ENCODE measurements at regions of chr17 and their contacts with region 1.

Region 1: DNA sequence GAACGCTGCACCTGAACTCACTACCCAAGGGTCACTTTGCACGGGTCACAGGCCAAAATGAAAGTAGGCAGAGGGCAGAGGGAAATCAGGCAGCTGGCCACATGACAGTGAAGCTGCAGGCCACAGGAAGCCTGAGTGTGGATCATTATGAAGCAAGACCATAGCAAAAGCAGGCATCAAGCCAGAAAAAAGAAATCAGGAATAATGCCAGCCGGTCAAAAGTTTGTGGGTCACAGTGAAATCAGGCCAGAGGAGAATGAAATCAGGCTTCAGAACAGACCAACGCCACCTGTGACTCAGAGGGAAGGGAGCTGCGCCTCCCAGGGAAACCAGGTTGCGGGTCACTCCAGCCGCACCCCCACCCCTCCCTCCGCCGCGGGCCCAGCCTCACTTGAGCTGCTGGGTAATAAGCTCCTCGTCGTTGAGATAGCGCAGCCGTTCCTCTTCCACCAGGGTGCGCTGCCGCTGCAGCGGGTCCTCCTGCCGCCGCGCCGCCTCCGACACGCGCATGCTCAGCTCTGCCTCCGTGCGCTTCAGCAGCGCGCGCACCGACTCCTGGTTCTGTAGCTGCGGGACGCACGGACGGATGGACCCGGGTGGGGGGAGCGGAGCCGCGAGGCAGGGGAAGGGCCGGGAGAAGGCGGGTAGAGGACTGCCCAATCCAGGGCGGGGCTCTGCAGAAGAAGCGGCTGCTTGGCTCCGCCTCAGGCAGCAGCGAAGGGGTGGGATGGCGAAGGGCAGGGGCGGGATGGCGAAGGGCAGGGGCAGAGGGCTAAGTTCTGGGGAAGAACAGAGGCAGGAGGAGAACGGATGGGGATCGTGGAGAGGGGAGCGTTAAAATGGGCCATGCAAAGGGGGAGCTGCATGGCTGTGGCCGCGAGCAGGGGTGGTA is 47.7 kb downstream of the SRCIN1 start:
- DNase-seq: peak; percentile 93
- ATAC-seq: peak; percentile 86
- H3K4me3 Mint-ChIP-seq: peak overlapping the region; percentile 79
- H3K27ac Mint-ChIP-seq: no peak overlapping the region
- H3K4me1 Mint-ChIP-seq: peaks cover 30% of the 10 kb centered on the region
- H3K27me3 Mint-ChIP-seq: peaks cover 44% of the 10 kb centered on the region

Region 2: DNA sequence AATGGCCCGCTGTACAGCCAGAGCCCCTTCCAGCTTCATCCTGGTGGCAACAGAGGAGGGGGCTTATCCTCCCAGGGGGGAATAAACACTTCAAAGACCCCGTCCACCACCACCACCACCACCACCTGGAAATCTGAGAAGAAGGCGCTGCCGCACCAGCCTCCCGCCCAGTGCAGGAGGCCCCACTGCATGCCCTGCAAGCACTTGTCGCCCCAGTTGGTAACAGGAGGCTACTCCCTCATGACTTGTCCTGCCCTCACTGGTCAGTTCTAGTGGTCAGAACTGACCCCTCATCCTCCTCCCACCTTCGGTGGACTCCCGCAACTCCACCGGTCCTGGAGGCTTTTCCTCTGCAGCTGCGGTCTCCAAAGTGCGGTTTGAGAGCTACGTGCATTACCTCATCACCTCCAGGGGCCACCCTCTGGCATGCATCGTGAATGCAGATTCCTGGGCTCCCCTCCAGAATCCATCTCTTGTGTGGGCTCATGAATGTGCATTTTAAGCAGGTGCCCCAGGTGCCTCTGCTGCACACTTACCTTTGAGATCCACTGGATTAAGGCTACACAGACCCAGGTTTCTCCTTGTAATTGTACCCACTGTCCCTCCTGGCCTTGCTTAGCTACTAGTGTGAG is 24.1 kb before region 1 on chr17:
- CTCF ChIA-PET with region 1: interaction called, 19 read pairs
- POLR2A ChIA-PET with region 1: interaction called, 3 read pairs
- DNase-seq: no peak
- ATAC-seq: no peak
- H3K4me3 Mint-ChIP-seq: no peak overlapping the region
- H3K27ac Mint-ChIP-seq: no peak overlapping the region
- H3K4me1 Mint-ChIP-seq: no peaks in the 10 kb centered on the region
- H3K27me3 Mint-ChIP-seq: peaks cover 6% of the 10 kb centered on the region

Region 3: GRCh38 chr17:38591759-38592241 is 33.7 kb after region 1 on chr17:
- CTCF ChIA-PET with region 1: interaction called, 136 read pairs
- POLR2A ChIA-PET with region 1: no interaction called
- DNase-seq: peak; percentile 59
- ATAC-seq: peak; percentile 59
- H3K4me3 Mint-ChIP-seq: peak overlapping the region; percentile 32
- H3K27ac Mint-ChIP-seq: peak overlapping the region; percentile 41
- H3K4me1 Mint-ChIP-seq: peaks cover 49% of the 10 kb centered on the region
- H3K27me3 Mint-ChIP-seq: peaks cover 78% of the 10 kb centered on the region

Region 4: GRCh38 chr17:38605888-38606645 is 48.0 kb after region 1 on chr17 and contains the start of gene SRCIN1:
- CTCF ChIA-PET with region 1: interaction called, 37 read pairs
- POLR2A ChIA-PET with region 1: no interaction called
- DNase-seq: peak; percentile 61
- ATAC-seq: peak; percentile 50
- H3K4me3 Mint-ChIP-seq: peak within 1 kb of the TSS; percentile 63
- H3K27ac Mint-ChIP-seq: no peak within 1 kb of the TSS
- H3K4me1 Mint-ChIP-seq: peaks cover 19% of the 10 kb centered on the region
- H3K27me3 Mint-ChIP-seq: peaks cover 67% of the 10 kb centered on the region
- total RNA-seq, gene SRCIN1: 0.34 TPM in 1 of 2 experiments, not detected in the other

Region 5: DNA sequence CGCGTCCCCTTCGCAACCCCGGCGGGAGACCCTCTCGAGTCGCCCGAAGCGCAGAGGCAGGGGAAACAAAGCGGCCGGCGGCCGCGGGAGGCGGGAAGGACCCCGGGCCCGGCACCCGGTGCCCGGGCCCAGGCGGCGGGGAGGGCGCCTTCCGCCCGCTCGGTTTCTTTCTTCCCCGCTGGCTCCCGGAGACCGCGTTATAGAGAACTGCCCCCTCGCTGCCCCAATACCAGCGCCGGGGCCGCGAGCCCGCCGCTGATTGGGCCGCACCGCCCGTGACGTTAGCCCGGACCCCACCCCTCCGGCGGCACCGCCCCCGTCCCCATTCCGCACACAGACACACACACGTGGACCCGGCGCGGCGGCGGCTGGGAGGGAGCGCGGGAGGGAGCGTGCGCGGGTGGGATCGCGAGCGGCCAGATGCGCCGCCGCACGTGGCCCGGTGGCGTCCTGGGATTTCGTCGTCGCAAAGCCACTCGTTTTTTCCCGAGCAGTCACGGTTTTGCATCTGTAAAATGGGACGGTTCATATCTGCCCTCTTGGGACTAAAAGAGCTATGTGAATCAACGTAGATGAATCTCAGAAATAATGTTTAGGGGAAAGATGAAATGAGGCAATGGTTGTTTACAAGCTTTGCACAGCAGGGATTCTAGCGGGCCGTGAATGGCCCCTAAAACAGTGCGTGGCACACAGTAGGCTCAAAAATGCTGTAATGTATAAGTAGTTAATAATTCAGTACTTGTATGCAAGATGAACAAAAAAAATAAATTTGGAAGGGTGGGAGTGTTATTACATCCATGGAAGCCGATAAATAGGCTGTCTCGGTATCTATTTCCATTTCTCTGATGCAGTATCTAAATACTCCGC is 116.9 kb after region 1 on chr17 and contains the start of gene EPOP:
- CTCF ChIA-PET with region 1: interaction called, 345 read pairs
- POLR2A ChIA-PET with region 1: no interaction called
- DNase-seq: peak; percentile 91
- ATAC-seq: peak; percentile 89
- H3K4me3 Mint-ChIP-seq: peak within 1 kb of the TSS; percentile 54
- H3K27ac Mint-ChIP-seq: peak within 1 kb of the TSS; percentile 60
- H3K4me1 Mint-ChIP-seq: peaks cover 40% of the 10 kb centered on the region
- H3K27me3 Mint-ChIP-seq: peaks cover 22% of the 10 kb centered on the region
- total RNA-seq, gene EPOP: 11.4 to 11.6 TPM

Measured in activated CD8-positive, alpha-beta T cell treated with anti-CD3 and anti-CD28 coated beads, Interleukin-2, amount 10 ng/mL, durations not matched to agents 7 days and 5 days (primary cell).